ENCODE measurements at regions of chr22 and their contacts with region 1.

Region 1: DNA sequence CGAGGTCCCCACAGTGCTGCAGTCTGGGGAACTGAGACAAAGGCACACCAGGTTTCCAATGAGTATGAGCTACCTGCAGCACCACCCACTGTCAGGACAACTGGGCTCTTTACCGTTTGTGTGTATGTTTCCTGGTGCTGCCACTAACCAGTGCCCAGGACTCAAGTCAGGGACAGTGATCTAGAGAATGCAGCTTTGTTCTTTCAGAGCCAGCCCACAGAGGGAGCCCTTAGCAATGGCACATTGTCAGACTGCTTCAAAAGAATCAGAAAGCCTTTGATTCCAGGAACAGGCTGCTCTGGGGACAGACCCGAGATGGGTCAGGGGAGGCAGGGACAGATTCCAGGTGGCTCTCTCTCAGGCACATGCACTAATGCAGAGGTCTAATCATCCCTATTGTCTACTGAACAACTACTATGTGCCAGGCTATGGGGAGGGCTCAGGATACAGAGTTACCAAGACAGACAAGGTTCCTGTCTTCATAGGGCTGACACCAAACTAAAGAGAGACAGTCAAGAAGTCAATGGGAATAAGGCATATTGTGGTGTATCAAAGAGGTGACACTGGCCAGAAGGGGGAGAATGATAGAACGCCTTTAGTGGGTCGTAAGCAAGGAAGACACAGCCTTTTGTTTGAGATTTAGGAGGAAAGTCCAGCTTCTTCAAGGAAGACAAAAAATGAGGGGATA is 103.7 kb downstream of the VPREB1 start:
- DNase-seq: no peak
- ATAC-seq: peak in 1 of 4 donors; percentile 36
- H3K4me3 ChIP-seq: no peak overlapping the region
- H3K27ac ChIP-seq: no peak overlapping the region
- H3K4me1 ChIP-seq: no peaks in the 10 kb centered on the region
- H3K27me3 ChIP-seq: peaks cover 0 to 54% (median 8%) of the 10 kb centered on the region in 9 donors
- CTCF ChIP-seq: no peak
- POLR2A ChIP-seq: no peak

Region 2: DNA sequence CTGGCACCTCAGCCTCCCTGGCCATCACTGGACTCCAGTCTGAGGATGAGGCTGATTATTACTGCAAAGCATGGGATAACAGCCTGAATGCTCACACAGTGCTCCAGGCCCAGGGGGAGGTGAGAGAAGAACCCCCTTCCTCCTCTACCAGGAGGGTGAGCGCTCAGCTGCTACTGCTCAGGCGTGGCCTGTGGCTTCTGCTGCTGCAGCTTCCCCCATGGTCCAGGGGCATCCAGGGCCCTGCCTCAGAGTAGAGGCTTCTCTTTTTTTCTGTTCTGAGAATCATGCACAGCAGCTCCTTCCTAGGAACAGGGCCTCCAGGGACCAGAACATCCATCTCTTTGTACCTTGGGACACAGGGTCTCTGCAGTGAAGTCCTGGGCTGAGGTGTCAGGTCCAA is 20.5 kb before region 1 on chr22:
- intact Hi-C with region 1: no loop called
- DNase-seq: no peak
- ATAC-seq: peak in 1 of 4 donors; percentile 18
- H3K4me3 ChIP-seq: no peak overlapping the region
- H3K27ac ChIP-seq: no peak overlapping the region
- H3K4me1 ChIP-seq: no peaks in the 10 kb centered on the region
- H3K27me3 ChIP-seq: peaks cover 0 to 49% (median 5%) of the 10 kb centered on the region in 9 donors
- CTCF ChIP-seq: no peak
- POLR2A ChIP-seq: no peak

Region 3: DNA sequence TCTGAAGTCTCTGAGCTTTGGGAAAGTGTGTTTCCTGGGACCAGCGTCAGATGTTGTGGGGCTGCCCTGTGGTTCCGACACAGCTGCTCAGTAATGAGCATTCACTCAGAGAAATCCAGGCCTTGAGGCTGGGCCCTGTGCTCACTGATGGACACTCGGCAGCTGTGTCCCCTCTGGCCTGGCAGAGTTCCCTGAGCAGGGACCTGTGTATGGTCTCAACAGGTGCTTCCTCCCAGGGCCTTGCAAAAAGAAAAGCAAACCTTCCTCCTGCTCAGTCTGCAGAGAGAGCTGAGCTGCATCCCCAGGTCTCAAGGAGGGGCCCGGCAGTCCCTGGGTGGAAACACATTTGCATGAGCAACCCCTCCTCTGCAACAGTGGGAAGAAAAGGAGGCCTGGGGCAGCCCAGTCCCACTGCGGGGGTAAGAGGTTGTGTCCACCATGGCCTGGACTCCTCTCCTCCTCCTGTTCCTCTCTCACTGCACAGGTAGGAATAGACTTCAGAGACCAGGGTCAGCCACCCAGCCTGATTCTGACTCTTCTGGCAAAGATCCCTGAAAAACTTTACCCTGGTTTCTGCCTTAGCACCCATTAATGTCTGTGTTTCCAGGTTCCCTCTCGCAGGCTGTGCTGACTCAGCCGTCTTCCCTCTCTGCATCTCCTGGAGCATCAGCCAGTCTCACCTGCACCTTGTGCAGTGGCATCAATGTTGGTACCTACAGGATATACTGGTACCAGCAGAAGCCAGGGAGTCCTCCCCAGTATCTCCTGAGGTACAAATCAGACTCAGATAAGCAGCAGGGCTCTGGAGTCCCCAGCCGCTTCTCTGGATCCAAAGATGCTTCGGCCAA is 27.5 kb after region 1 on chr22:
- intact Hi-C with region 1: loop called in 2 of 10 experiments (anchors 2 kb)
- DNase-seq: peak in 1 of 5 donors; percentile 21
- ATAC-seq: peak in 1 of 4 donors; percentile 26
- H3K4me3 ChIP-seq: no peak overlapping the region
- H3K27ac ChIP-seq: no peak overlapping the region
- H3K4me1 ChIP-seq: peaks cover 0 to 9% (median 2%) of the 10 kb centered on the region in 12 donors
- H3K27me3 ChIP-seq: peaks cover 0 to 40% (median 6%) of the 10 kb centered on the region in 9 donors
- CTCF ChIP-seq: no peak
- POLR2A ChIP-seq: no peak

Region 4: GRCh38 chr22:22397277-22397870 is 49.1 kb after region 1 on chr22:
- intact Hi-C with region 1: loop called in 5 of 10 experiments (anchors 1 to 5 kb)
- DNase-seq: peak in 3 of 5 donors; percentile 52 to 73 (median 56)
- ATAC-seq: peak; percentile 66 to 91 (median 84)
- H3K4me3 ChIP-seq: no peak overlapping the region
- H3K27ac ChIP-seq: peak overlapping the region in 9 of 12 donors; percentile 14 to 57 (median 44)
- H3K4me1 ChIP-seq: peaks cover 0 to 7% (median 0%) of the 10 kb centered on the region in 12 donors
- H3K27me3 ChIP-seq: peaks cover 0 to 14% (median 0%) of the 10 kb centered on the region in 9 donors
- CTCF ChIP-seq: peak in 1 of 12 donors; percentile 19
- POLR2A ChIP-seq: no peak

Region 5: DNA sequence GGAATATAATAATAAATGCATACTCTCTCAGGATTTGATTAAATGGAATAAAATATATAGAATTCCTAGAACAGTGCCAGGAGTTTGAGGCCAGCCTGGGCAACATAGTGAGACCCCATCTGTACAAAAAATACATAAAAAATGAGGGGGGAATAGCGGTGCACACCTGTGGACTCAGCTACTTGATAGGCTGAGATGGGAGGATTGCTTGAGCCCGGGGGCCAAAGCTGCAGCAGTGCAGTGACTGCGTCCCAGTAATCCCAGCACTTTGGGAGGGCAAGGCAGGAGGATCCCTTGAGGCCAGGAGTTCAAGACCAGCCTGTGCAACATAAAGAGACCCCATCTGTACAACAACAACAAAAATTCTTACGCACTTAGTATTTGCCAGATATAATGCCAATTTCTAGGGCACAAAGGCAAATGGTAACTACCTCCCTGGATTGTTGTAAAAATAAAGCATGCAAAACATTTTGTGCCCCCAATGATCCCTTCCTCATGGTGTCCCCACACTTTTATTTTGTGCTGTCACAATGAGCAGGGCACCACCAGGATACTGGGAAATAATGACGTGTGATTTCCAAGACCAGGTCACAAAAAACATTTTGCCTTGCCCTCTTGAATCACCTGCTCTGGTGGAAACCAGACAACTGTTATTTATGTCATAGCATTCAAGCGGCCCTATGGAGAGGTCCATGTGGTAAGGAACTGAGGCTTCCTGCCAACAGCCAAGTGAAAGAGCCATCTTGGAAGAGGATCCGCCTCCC is 190.1 kb after region 1 on chr22:
- intact Hi-C with region 1: no loop called
- DNase-seq: no peak
- ATAC-seq: no peak
- H3K4me3 ChIP-seq: no peak overlapping the region
- H3K27ac ChIP-seq: no peak overlapping the region
- H3K4me1 ChIP-seq: no peaks in the 10 kb centered on the region
- H3K27me3 ChIP-seq: peaks cover 0 to 20% (median 0%) of the 10 kb centered on the region in 9 donors
- CTCF ChIP-seq: no peak
- POLR2A ChIP-seq: no peak